ENCODE measurements at regions of chr18 and their contacts with region 1.

Region 1: DNA sequence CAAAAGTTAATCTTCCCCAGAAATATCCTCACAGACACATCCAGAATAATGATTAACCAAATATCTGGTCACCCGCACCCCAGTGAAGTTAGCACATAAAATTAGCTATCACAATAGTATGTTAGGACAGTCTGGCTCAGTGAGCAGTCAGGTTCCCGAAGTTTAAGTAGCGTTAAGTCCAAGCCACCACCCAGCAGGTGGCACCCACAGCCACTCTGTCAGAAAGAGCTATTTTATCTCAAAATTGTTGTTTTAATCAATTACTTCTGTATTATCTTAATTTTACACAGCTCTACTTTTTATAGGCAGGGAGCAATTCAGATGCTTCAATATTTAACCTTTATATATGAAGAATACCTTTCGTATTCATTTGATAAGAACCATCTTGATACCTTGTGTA is 537.5 kb downstream of the MBD2 start:
- DNase-seq: no peak
- ATAC-seq: no peak
- H3K4me3 ChIP-seq: no peak overlapping the region
- H3K27ac ChIP-seq: no peak overlapping the region
- H3K4me1 ChIP-seq: no peaks in the 10 kb centered on the region
- H3K27me3 ChIP-seq: no peaks in the 10 kb centered on the region
- CTCF ChIP-seq: no peak
- POLR2A ChIP-seq: no peak

Region 2: DNA sequence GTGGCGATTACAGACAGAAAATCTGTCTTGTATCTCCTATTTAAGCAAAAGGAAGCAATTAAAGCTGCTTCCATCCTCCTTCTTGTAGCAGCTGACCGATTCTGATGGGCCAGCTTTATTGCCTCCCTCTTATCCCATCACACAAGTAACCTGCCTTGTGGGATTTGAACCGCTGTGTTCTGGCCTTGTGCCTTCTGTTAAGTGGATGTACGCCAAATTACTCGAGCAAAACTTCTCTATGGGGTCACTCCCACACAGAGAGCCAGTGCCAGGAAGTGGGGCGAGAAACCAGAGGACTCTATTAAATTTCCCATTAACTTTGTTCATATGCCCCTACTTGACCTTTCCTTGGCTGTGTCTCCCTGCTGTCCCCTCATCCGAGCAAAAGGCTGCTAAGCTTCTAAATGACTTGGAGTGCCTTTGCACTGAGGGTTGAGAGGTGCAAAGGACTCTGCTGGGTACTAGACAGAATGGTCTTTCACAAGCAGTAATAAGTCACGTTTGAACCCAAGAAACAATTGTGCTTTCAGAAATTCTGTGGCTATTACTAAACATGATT is 135.1 kb before region 1 on chr18:
- intact Hi-C with region 1: no loop called
- DNase-seq: peak in 3 of 5 donors; percentile 10 to 35 (median 25)
- ATAC-seq: peak in 2 of 4 donors; percentile 33 to 34
- H3K4me3 ChIP-seq: no peak overlapping the region
- H3K27ac ChIP-seq: no peak overlapping the region
- H3K4me1 ChIP-seq: no peaks in the 10 kb centered on the region
- H3K27me3 ChIP-seq: no peaks in the 10 kb centered on the region
- CTCF ChIP-seq: no peak
- POLR2A ChIP-seq: no peak

Region 3: GRCh38 chr18:53625997-53626599 is 60.9 kb before region 1 on chr18:
- intact Hi-C with region 1: loop called in 1 of 10 experiments (anchors 10 kb)
- DNase-seq: peak in 1 of 5 donors; percentile 48
- ATAC-seq: no peak
- H3K4me3 ChIP-seq: no peak overlapping the region
- H3K27ac ChIP-seq: no peak overlapping the region
- H3K4me1 ChIP-seq: no peaks in the 10 kb centered on the region
- H3K27me3 ChIP-seq: no peaks in the 10 kb centered on the region
- CTCF ChIP-seq: no peak
- POLR2A ChIP-seq: no peak

Measured in heart left ventricle (tissue), 16 donors.